ENCODE measurements at regions of chr1 and their contacts with region 1.

Region 1: DNA sequence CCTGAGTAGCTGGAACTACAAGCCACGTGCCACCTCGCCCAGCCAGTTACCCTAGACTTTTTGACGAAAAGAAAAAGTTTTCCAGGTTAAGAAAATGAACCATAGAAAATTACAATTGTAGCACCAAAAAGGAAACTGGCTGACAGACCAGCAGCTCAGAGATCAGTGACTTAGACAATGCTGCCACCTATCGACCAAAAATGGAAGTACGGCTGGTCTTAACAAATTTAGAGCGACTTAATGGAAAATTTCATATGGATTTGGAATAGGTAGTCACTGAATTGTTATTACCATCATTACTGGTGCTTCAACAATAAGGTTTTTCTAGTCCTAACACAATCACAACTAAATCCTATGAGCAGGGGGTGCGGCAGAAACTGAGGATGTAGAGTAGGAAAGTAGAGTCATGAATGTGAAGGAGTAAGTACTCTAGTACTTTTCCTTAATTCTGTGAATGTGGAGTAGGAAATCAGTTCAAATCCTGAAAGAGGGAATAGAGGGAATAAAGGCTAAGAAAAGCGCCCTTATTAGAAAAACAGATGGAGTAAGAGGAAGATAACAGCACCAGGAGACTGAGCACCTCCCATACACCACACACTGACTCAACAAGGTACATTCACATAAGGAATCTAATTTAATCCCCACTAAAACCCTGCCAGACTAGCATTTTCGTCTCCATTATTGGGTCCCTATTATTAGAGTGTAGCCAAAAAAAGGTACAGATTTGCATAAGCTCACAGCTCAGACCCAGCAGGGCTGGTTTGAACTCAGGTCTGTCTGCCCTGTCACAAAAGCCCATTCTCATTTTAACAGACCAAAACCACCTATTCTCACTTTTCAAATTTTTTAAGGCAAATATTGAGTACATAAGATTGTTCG is 37.9 kb upstream of the MGST3 start:
- DNase-seq: peak; percentile 71 to 77
- H3K4me3 ChIP-seq: no peak overlapping the region
- H3K27ac ChIP-seq: no peak overlapping the region
- H3K4me1 ChIP-seq: no peaks in the 10 kb centered on the region
- H3K27me3 ChIP-seq: no peaks in the 10 kb centered on the region
- CTCF ChIP-seq: peak; percentile 90 to 96 (median 96)
- POLR2A ChIP-seq: no peak

Region 2: DNA sequence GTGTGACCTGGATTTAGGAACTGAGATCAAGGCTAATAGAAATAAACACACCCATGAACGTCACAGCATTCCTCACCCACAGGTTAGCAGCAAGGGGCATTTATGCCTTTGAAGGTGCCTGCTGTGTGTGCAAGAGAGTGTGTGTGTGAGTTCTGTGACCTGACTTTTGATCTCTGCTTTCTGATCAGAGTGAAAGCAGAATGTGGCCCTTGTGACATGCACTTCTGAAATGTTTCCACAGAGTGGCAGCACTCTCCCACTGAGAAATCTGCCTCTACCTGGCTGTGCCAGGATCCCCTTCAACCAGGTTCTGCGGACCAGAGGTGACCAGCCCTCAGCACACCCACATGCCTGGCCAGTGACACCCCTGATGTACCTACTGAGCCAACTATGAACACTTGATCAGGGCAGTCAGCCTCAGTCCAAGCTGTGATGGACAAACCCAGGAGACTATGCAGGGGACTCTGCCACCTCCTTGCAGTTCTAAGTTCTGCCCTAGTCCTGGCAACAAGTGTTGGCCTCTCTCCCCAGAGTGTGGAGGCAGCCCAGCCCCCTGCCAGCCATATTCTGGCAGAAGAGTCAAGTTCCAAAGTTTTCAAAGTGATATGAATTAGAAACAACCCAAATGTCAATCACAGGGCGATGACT is 189.2 kb before region 1 on chr1:
- intact Hi-C with region 1: loop called (anchors 5 kb)
- DNase-seq: peak; percentile 48 to 57
- H3K4me3 ChIP-seq: no peak overlapping the region
- H3K27ac ChIP-seq: no peak overlapping the region
- H3K4me1 ChIP-seq: no peaks in the 10 kb centered on the region
- H3K27me3 ChIP-seq: no peaks in the 10 kb centered on the region
- CTCF ChIP-seq: peak in 5 of 6 experiments; percentile 50 to 83 (median 81)
- POLR2A ChIP-seq: no peak